ENCODE measurements at regions of chr10 and their contacts with region 1.

Region 1: GRCh38 chr10:62610649-62611229 is 193.8 kb upstream of the ADO start:
- DNase-seq: peak; percentile 86
- ATAC-seq: peak; percentile 81
- H3K4me3 Mint-ChIP-seq: no peak overlapping the region
- H3K27ac Mint-ChIP-seq: no peak overlapping the region
- H3K4me1 Mint-ChIP-seq: peaks cover 40% of the 10 kb centered on the region
- H3K27me3 Mint-ChIP-seq: peaks cover 4% of the 10 kb centered on the region
- CTCF ChIP-seq: peak; percentile 87

Region 2: DNA sequence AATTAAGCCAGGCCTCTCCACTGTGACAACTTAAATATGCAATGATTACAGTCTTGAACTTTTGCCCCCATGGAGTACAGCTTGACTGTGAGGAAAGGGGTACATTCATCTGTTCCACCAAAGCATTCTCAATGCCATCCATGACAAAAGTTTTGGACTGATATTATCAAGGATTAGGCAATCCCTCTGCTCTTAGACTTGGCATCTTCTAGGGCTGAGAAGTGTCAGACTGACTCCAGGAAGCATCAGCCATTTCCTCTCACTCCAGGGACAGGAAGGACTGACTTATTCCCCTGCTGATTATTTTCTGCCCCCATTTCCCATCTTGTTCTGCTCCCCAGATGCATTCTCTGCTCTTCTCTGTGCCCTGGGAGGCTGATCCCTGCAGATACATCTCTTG is 166.9 kb before region 1 on chr10:
- CTCF ChIA-PET with region 1: no interaction called
- POLR2A ChIA-PET with region 1: no interaction called
- intact Hi-C with region 1: no loop called
- DNase-seq: no peak
- ATAC-seq: no peak
- H3K4me3 Mint-ChIP-seq: no peak overlapping the region
- H3K27ac Mint-ChIP-seq: no peak overlapping the region
- H3K4me1 Mint-ChIP-seq: no peaks in the 10 kb centered on the region
- H3K27me3 Mint-ChIP-seq: peaks cover 10% of the 10 kb centered on the region
- CTCF ChIP-seq: no peak

Region 3: DNA sequence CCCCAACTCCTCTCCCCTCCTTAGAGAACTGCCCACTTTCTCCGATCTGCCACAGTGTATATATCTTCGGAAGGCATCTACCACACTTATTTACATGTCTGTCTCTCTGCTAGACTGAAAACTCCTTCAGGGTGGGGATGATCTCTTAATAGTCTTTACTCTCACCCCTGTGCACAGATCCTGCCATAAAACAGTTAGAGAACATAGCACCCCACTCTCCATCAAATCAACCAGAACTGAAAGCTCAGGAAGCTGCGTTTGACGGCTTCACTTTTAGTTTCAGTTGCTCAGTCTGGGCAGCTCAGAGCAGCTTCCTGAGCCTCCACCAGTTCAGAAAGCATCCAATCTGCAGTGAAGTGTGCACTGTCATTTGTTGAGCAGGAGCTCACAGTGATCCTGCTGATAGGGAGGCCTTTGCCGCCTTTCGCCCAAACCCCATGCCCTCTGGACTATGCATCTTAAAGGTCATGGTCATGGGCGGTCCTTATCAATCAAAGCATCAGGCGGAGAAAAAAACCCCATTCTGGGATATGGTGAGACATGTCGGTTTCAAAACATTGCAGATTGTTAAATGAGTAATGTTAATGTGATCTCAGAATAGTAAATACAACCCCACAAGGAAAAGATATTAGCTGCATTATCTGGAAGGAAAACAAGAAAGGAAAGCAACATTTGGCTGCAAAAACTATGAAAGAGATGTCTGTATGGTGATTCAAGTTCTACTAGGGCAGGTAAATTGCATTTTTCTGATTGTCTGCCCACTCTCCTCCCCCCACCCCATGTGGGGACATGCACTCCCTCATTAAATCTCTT is 26.7 kb after region 1 on chr10:
- CTCF ChIA-PET with region 1: interaction called, 19 read pairs
- POLR2A ChIA-PET with region 1: interaction called, 3 read pairs
- intact Hi-C with region 1: no loop called
- DNase-seq: peak; percentile 90
- ATAC-seq: peak; percentile 93
- H3K4me3 Mint-ChIP-seq: no peak overlapping the region
- H3K27ac Mint-ChIP-seq: no peak overlapping the region
- H3K4me1 Mint-ChIP-seq: peaks cover 25% of the 10 kb centered on the region
- H3K27me3 Mint-ChIP-seq: no peaks in the 10 kb centered on the region
- CTCF ChIP-seq: no peak

Region 4: DNA sequence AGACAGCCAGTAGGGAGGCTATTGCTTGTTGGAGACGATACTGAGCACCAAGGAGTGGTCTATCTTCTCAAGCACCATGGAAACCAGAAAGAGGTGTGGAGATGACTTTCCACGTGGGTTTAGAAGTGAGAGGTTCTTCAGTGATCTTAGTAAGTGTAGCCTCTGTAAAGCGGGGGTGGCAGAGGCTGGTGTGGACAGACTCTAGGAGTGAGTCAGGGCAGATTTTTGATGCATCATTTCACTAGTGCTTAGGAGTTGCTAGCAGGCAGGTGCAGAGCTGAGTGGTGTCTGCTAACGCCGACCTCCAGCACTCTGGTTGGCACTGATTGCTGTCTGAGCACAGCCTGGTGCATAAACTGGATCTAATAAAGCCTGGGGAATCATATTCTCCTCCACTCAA is 115.4 kb after region 1 on chr10:
- CTCF ChIA-PET with region 1: interaction called, 35 read pairs
- POLR2A ChIA-PET with region 1: interaction called, 3 read pairs
- intact Hi-C with region 1: loop called (anchors 5 kb)
- DNase-seq: peak; percentile 90
- ATAC-seq: peak; percentile 98
- H3K4me3 Mint-ChIP-seq: no peak overlapping the region
- H3K27ac Mint-ChIP-seq: no peak overlapping the region
- H3K4me1 Mint-ChIP-seq: peaks cover 45% of the 10 kb centered on the region
- H3K27me3 Mint-ChIP-seq: peaks cover 2% of the 10 kb centered on the region
- CTCF ChIP-seq: no peak

Region 5: GRCh38 chr10:62811159-62811875 is 200.6 kb after region 1 on chr10:
- CTCF ChIA-PET with region 1: interaction called, 128 read pairs
- POLR2A ChIA-PET with region 1: interaction called, 10 read pairs
- intact Hi-C with region 1: loop called (anchors 2 kb)
- DNase-seq: peak; percentile 96
- ATAC-seq: peak; percentile 47
- H3K4me3 Mint-ChIP-seq: peak overlapping the region; percentile 97
- H3K27ac Mint-ChIP-seq: peak overlapping the region; percentile 67
- H3K4me1 Mint-ChIP-seq: peaks cover 73% of the 10 kb centered on the region
- H3K27me3 Mint-ChIP-seq: no peaks in the 10 kb centered on the region
- CTCF ChIP-seq: no peak

Region 6: DNA sequence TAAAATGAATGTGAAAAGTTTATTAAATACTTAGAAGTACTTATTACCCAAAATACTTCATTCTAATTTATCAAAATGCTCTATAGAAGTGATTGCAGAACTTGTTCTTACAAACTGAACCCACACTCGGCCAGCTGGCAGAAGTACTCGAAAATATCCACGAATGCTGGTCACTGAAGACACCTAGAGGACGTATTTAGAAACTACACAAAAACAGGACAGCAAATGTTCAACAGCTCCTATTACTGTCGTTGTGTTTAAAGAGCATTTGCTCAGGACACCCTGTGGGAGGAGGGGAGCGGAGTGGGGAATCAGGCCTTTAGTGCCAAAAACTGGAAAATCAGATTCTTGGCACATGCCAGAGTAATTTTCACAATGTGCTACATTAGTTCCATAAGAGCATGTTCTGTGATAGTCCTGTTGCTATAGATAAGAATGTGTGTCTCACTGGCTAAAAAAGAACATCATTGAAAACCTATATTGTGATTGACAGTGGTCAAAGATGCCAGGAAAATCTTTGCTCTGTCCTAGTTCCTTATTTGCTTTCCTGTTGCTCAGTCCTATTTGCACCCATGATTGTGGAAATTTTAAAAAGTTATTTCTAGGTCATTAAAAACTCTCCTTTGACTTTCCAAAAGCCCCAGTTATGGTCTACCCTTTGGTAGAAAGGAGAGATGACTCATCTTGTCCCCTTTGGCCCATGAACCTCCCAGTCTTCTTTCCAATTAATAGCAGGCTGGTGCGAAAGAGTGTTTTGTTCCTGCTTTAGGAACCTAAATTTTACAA is 473.4 kb after region 1 on chr10:
- CTCF ChIA-PET with region 1: interaction called, 8 read pairs
- POLR2A ChIA-PET with region 1: no interaction called
- intact Hi-C with region 1: loop called (anchors 5 kb)
- DNase-seq: peak; percentile 61
- ATAC-seq: peak; percentile 75
- H3K4me3 Mint-ChIP-seq: no peak overlapping the region
- H3K27ac Mint-ChIP-seq: no peak overlapping the region
- H3K4me1 Mint-ChIP-seq: no peaks in the 10 kb centered on the region
- H3K27me3 Mint-ChIP-seq: peaks cover 16% of the 10 kb centered on the region
- CTCF ChIP-seq: peak; percentile 75

Measured in activated CD8-positive, alpha-beta T cell treated with anti-CD3 and anti-CD28 coated beads for 36 hours (primary cell).